CD4-positive, alpha-beta T cell (primary cell): ENCODE measurements at regions of chr15 and their contacts with region 1.

Region 1: GRCh38 chr15:84908564-84908963 is 24.1 kb downstream of the SLC28A1 start:
- DNase-seq: no peak
- ATAC-seq: no peak
- H3K4me3 ChIP-seq: no peak overlapping the region
- H3K4me3 Mint-ChIP-seq: no peak overlapping the region
- H3K27ac ChIP-seq: no peak overlapping the region
- H3K27ac Mint-ChIP-seq: no peak overlapping the region
- H3K4me1 ChIP-seq: no peaks in the 10 kb centered on the region
- H3K4me1 Mint-ChIP-seq: no peaks in the 10 kb centered on the region
- H3K27me3 ChIP-seq: no peaks in the 10 kb centered on the region
- H3K27me3 Mint-ChIP-seq: no peaks in the 10 kb centered on the region
- CTCF ChIP-seq: no peak

Region 2: GRCh38 chr15:84863565-84864443 is 44.8 kb before region 1 on chr15:
- CTCF ChIA-PET with region 1: no interaction called
- POLR2A ChIA-PET with region 1: no interaction called
- intact Hi-C with region 1: loop called in 1 of 2 experiments (anchors 5 kb)
- DNase-seq: no peak
- ATAC-seq: no peak
- H3K4me3 ChIP-seq: no peak overlapping the region
- H3K4me3 Mint-ChIP-seq: no peak overlapping the region
- H3K27ac ChIP-seq: no peak overlapping the region
- H3K27ac Mint-ChIP-seq: no peak overlapping the region
- H3K4me1 ChIP-seq: no peaks in the 10 kb centered on the region
- H3K4me1 Mint-ChIP-seq: no peaks in the 10 kb centered on the region
- H3K27me3 ChIP-seq: no peaks in the 10 kb centered on the region
- H3K27me3 Mint-ChIP-seq: no peaks in the 10 kb centered on the region
- CTCF ChIP-seq: no peak